Colonic mucosa (tissue), 4 donors: ENCODE measurements at regions of chrX and their contacts with region 1.

Region 1: DNA sequence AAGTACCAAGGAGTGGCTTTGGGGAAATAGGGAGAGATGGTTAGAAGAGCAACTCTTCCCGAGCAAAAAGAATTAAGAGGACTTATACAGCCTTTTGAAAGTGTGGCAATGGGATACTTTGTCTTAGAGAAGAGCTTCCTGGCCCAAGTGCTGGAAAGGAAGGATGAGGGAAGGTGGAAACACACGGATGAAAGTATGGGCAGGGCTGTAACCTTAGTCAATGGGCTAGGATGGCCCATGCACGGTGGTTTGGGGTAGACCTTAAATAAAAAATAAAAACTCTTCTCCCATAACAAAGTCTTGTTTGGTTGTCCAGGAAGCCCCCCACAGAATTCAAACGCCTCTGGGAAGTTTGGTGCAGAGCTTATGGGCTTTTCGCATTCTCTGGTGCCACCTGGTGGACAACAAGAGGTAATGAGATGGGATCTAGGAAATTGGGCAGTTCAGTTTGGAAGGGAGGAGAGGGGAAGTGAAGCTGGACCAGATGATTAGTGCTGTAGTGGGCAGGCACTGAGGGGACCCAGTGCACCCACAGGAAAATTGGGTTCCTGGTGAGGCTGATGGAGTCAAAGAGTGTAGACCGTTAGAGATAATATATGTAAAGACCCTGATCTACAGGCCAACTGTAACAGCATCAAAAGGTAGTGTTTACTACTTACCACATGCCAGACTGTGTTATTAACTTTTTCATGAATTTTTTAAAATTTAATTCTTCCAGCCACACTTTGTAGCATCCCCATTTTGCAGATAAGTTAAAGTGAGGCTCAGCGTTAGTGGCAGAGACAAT is 13.8 kb upstream of the ENOX2 start:
- DNase-seq: peak; percentile 43
- H3K4me3 ChIP-seq: no peak overlapping the region
- H3K27ac ChIP-seq: no peak overlapping the region
- H3K4me1 ChIP-seq: no peaks in the 10 kb centered on the region
- H3K27me3 ChIP-seq: no peaks in the 10 kb centered on the region
- CTCF ChIP-seq: peak; percentile 74

Region 2: GRCh38 chrX:130395331-130395730 is 521.5 kb before region 1 on chrX:
- intact Hi-C with region 1: loop called (anchors 5 kb)
- DNase-seq: no peak
- H3K4me3 ChIP-seq: no peak overlapping the region
- H3K27ac ChIP-seq: no peak overlapping the region
- H3K4me1 ChIP-seq: no peaks in the 10 kb centered on the region
- H3K27me3 ChIP-seq: no peaks in the 10 kb centered on the region
- CTCF ChIP-seq: no peak

Region 3: DNA sequence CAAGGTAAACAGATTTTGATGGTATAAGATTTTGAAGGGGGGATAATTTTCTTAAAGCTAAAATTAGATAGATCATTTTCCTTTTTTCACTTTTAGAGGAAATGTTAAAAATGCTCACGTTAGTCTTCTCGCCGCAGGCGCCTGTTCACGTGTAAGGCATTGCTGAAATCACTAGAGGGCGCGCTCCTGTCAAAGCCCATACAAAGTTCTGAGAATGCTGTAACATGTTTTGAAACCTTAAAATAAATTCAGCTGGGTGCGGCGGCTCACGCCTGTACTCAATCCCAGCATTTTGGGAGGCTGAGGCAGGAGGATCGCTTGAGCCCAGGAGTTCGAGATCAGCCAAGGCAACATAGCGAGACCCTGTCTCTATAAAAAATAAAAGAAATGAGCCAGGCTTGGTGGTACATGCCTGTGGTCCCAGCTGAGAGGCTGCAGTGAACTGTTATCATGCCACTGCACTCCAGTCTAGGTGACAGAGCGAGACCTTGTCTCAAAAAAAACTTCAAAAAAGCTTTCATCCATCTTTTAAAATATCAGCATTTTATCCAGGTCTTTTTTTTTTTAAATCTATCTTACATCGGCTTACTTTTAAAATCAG is 377.0 kb before region 1 on chrX:
- intact Hi-C with region 1: loop called (anchors 2 kb)
- DNase-seq: peak; percentile 36
- H3K4me3 ChIP-seq: no peak overlapping the region
- H3K27ac ChIP-seq: no peak overlapping the region
- H3K4me1 ChIP-seq: no peaks in the 10 kb centered on the region
- H3K27me3 ChIP-seq: no peaks in the 10 kb centered on the region
- CTCF ChIP-seq: peak; percentile 56

Region 4: DNA sequence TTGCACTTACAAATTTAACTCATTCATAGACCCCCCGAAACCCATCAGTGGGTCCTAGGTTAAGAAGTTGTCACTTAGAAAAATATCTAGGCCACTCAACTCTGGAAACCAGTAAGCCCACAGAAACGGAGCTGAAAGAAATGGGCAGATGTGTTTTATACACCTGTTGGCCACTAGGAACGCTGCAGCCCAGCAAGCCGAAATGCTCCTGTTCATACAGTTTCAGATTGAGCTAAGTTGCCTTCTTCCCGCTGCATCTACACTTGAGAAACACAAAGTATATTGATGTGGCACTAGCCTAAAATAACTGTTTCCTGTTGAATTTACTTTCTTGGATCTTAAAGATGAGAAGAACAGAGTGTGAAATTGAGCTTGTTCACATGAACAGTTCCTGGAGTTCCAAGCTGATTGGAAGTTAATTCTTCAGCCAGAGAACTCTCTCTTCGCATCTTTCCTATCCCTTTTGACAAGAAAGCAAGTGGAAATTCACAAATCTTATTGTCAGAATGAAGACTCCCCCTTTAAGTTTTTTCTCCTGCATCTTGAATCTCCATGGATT is 340.9 kb before region 1 on chrX:
- intact Hi-C with region 1: loop called (anchors 5 kb)
- DNase-seq: peak; percentile 25
- H3K4me3 ChIP-seq: no peak overlapping the region
- H3K27ac ChIP-seq: no peak overlapping the region
- H3K4me1 ChIP-seq: no peaks in the 10 kb centered on the region
- H3K27me3 ChIP-seq: no peaks in the 10 kb centered on the region
- CTCF ChIP-seq: peak; percentile 67

Region 5: GRCh38 chrX:130793966-130794365 is 122.9 kb before region 1 on chrX:
- intact Hi-C with region 1: no loop called
- DNase-seq: no peak
- H3K4me3 ChIP-seq: no peak overlapping the region
- H3K27ac ChIP-seq: no peak overlapping the region
- H3K4me1 ChIP-seq: no peaks in the 10 kb centered on the region
- H3K27me3 ChIP-seq: no peaks in the 10 kb centered on the region
- CTCF ChIP-seq: no peak

Region 6: GRCh38 chrX:131058136-131058868 is 141.5 kb after region 1 on chrX and contains the start of gene ARHGAP36:
- intact Hi-C with region 1: no loop called
- DNase-seq: no peak
- H3K4me3 ChIP-seq: no peak within 1 kb of the TSS
- H3K27ac ChIP-seq: no peak within 1 kb of the TSS
- H3K4me1 ChIP-seq: no peaks in the 10 kb centered on the region
- H3K27me3 ChIP-seq: no peaks in the 10 kb centered on the region
- CTCF ChIP-seq: no peak
- total RNA-seq, gene ARHGAP36: 0.66 TPM in 1 of 2 donors, not detected in the other